ENCODE measurements at regions of chr3 and their contacts with region 1.

Region 1: DNA sequence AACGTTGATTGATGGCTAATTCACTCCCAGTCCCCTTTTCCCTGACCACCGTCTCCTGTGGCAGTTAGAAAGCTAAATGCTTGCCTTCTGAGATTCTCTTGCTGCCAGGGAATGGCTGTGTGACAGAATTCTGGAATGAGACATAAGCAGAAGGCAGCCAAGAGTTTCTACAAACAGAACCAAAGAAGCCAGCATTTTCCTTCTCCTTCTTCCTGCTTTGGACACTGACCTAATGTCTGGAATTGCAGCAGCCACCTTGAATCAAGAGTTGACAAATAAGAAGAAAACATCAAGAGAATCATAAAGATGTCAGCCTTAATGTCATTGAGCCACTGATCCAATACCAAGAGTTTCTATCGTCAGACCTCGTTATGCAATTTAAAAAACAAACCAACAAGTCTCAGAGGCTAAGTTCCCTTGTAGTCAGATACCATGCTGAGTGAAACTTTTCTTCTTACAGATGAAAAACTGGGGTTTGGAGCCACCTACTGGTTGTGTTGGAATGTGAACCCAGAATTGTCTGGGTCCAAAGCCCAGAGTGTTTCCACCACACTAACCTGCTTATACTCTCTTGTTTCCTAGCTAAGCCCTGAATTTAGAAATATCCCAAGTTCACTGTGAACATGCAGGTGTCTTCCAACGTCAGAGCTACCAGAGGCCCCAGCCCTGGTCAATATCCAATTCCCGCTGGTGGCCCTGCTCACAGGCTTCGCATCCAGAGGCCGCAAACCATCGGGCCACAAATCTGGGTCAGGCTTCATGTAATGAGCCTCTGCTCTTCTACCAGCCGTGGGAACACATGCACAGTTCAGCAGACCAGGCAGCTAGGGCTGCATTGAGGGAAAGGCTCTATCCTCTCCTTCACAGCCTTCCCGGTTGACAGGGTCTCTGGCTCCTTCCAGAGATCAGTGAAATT is 42.5 kb downstream of the MCF2L2 start:
- DNase-seq: peak; percentile 61
- H3K4me3 ChIP-seq: no peak overlapping the region
- H3K27ac ChIP-seq: peak overlapping the region in 2 of 4 donors; percentile 18
- H3K4me1 ChIP-seq: peaks cover 0 to 6% (median 1%) of the 10 kb centered on the region in 4 donors
- H3K27me3 ChIP-seq: no peaks in the 10 kb centered on the region
- CTCF ChIP-seq: peak; percentile 64 to 81 (median 72)
- EP300 ChIP-seq: no peak
- POLR2A ChIP-seq: no peak

Region 2: GRCh38 chr3:182713743-182714517 is 672.0 kb before region 1 on chr3:
- in situ Hi-C with region 1: loop called in 1 of 4 experiments (anchors 25 kb)
- intact Hi-C with region 1: no loop called
- DNase-seq: no peak
- H3K4me3 ChIP-seq: no peak overlapping the region
- H3K27ac ChIP-seq: peak overlapping the region in 1 of 4 donors; percentile 22
- H3K4me1 ChIP-seq: peaks cover 0 to 36% (median 15%) of the 10 kb centered on the region in 4 donors
- H3K27me3 ChIP-seq: no peaks in the 10 kb centered on the region
- CTCF ChIP-seq: peak; percentile 43 to 69 (median 57)
- EP300 ChIP-seq: no peak
- POLR2A ChIP-seq: no peak

Region 3: GRCh38 chr3:183122257-183122932 is 263.6 kb before region 1 on chr3:
- in situ Hi-C with region 1: loop called (anchors 5 to 10 kb)
- intact Hi-C with region 1: loop called (anchors 5 kb)
- DNase-seq: no peak
- H3K4me3 ChIP-seq: no peak overlapping the region
- H3K27ac ChIP-seq: no peak overlapping the region
- H3K4me1 ChIP-seq: peaks cover 0 to 7% (median 0%) of the 10 kb centered on the region in 4 donors
- H3K27me3 ChIP-seq: peaks cover 7% of the 10 kb centered on the region
- CTCF ChIP-seq: peak; percentile 83 to 87 (median 84)
- EP300 ChIP-seq: no peak
- POLR2A ChIP-seq: no peak

Region 4: GRCh38 chr3:183129243-183129642 is 256.7 kb before region 1 on chr3:
- in situ Hi-C with region 1: loop called (anchors 5 to 10 kb)
- intact Hi-C with region 1: loop called (anchors 5 kb)
- DNase-seq: no peak
- H3K4me3 ChIP-seq: no peak overlapping the region
- H3K27ac ChIP-seq: no peak overlapping the region
- H3K4me1 ChIP-seq: no peaks in the 10 kb centered on the region
- H3K27me3 ChIP-seq: peaks cover 5% of the 10 kb centered on the region
- CTCF ChIP-seq: no peak
- EP300 ChIP-seq: no peak
- POLR2A ChIP-seq: no peak

Region 5: GRCh38 chr3:183180105-183180783 is 205.7 kb before region 1 on chr3:
- in situ Hi-C with region 1: loop called (anchors 5 kb)
- intact Hi-C with region 1: loop called (anchors 5 kb)
- DNase-seq: no peak
- H3K4me3 ChIP-seq: peak overlapping the region in 1 of 4 donors; percentile 57
- H3K27ac ChIP-seq: no peak overlapping the region
- H3K4me1 ChIP-seq: peaks cover 0 to 24% (median 17%) of the 10 kb centered on the region in 4 donors
- H3K27me3 ChIP-seq: peaks cover 63% of the 10 kb centered on the region
- CTCF ChIP-seq: no peak
- EP300 ChIP-seq: no peak
- POLR2A ChIP-seq: no peak

Region 6: GRCh38 chr3:183188895-183189462 is 197.0 kb before region 1 on chr3:
- in situ Hi-C with region 1: loop called (anchors 5 kb)
- intact Hi-C with region 1: loop called (anchors 5 kb)
- DNase-seq: peak; percentile 43
- H3K4me3 ChIP-seq: no peak overlapping the region
- H3K27ac ChIP-seq: no peak overlapping the region
- H3K4me1 ChIP-seq: peaks cover 0 to 11% (median 3%) of the 10 kb centered on the region in 4 donors
- H3K27me3 ChIP-seq: no peaks in the 10 kb centered on the region
- CTCF ChIP-seq: peak in 3 of 5 experiments; percentile 16 to 26 (median 18)
- EP300 ChIP-seq: no peak
- POLR2A ChIP-seq: no peak

Measured in transverse colon (tissue), 4 donors.